ENCODE measurements at regions of chr17 and their contacts with region 1.

Region 1: DNA sequence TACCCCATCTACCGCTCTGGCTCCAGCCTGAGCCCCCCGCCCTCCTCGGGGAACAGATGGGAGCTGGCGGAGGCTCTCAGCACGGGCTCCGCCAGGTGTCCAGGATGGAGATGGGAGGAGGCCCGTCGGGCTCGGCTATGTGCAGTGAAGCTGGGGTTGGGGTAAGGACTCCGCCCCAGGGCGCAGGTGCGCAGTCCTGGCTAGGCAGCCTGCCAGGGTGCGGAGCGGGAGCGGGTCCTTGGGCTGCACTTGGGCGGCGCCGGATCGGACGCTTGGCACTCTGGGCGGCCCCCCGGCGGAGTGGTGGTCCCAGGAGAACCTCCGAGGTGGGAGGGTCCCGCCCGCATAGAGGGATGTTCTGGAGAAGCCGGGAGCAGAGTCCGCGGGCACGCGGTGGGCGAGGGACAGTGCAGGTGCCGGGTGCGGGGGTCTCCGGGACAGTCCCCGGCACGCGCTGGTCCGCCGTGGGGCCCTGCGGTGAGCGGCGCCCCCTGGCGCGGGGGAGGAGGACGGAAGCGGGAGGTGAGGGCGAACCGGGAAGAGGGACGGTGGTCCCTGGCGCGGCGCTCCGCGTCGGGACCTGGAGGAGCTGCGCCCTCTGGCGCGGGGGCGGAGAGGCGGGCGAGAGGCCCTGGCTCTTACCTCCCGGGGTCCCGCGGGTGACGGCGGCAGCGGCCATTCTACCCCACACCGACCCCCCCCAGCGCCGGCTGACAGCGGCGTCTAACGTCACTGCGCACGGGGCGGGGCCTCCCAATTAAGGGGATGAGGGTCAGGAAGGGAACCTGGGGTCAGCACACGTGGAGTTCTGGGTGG is at the start of gene CAMTA2:
- DNase-seq: peak; percentile 87 to 90
- ATAC-seq: peak; percentile 89
- H3K4me3 ChIP-seq: peak within 1 kb of the TSS; percentile 78
- H3K27ac ChIP-seq: peak within 1 kb of the TSS; percentile 88 to 91
- H3K4me1 ChIP-seq: peaks cover 21% of the 10 kb centered on the region
- CTCF ChIP-seq: peak; percentile 98
- EP300 ChIP-seq: no peak
- POLR2A ChIP-seq: peak; percentile 54
- RAD21 ChIP-seq: peak; percentile 44 to 75; a peak in 4 of 5 replicates
- polyA plus RNA-seq, gene CAMTA2: 12.4 and 17.7 TPM in 2 replicates

Region 2: GRCh38 chr17:4903051-4903818 is 83.9 kb before region 1 on chr17 and contains the start of gene CHRNE:
- CTCF ChIA-PET with region 1: interaction called, 40 read pairs
- POLR2A ChIA-PET with region 1: no interaction called
- DNase-seq: peak; percentile 58 to 89
- ATAC-seq: peak; percentile 74 to 85
- H3K4me3 ChIP-seq: no peak within 1 kb of the TSS
- H3K27ac ChIP-seq: no peak within 1 kb of the TSS
- H3K4me1 ChIP-seq: 0 out of 3 replicates have a peak, but pooled peaks cover 5% of the 10 kb centered on the region
- CTCF ChIP-seq: peak; percentile 90
- EP300 ChIP-seq: no peak
- POLR2A ChIP-seq: no peak
- RAD21 ChIP-seq: peak; percentile 62 to 73
- polyA plus RNA-seq, gene CHRNE: 0.07 and 0.10 TPM in 2 replicates

Region 3: GRCh38 chr17:4939796-4940624 is 47.1 kb before region 1 on chr17 and contains the starts of genes RNF167 and SLC25A11:
- CTCF ChIA-PET with region 1: interaction called, 33 read pairs
- POLR2A ChIA-PET with region 1: interaction called, 13 read pairs
- DNase-seq: peak; percentile 99 to 100
- ATAC-seq: peak; percentile 80 to 81
- H3K4me3 ChIP-seq: peak within 1 kb of the TSS; percentile 85
- H3K27ac ChIP-seq: peak within 1 kb of the TSS; percentile 89 to 93
- H3K4me1 ChIP-seq: peaks cover 49% of the 10 kb centered on the region
- CTCF ChIP-seq: no peak
- EP300 ChIP-seq: no peak
- POLR2A ChIP-seq: peak; percentile 91
- RAD21 ChIP-seq: 0 out of 5 replicates have a peak, but pooled peaks of 1 of the 2 experiments have one; percentile 5
- polyA plus RNA-seq, gene RNF167: 98.7 and 110 TPM in 2 replicates
- polyA plus RNA-seq, gene SLC25A11: 60.2 and 64.4 TPM in 2 replicates

Region 4: GRCh38 chr17:4956493-4957061 is 30.6 kb before region 1 on chr17:
- CTCF ChIA-PET with region 1: interaction called, 28 read pairs
- POLR2A ChIA-PET with region 1: no interaction called
- DNase-seq: no peak
- ATAC-seq: no peak
- H3K4me3 ChIP-seq: no peak overlapping the region
- H3K27ac ChIP-seq: no peak overlapping the region
- H3K4me1 ChIP-seq: peaks cover 17% of the 10 kb centered on the region
- CTCF ChIP-seq: peak; percentile 24; the same call in 2 of the 3 replicates
- EP300 ChIP-seq: no peak
- POLR2A ChIP-seq: no peak
- RAD21 ChIP-seq: no peak

Region 5: GRCh38 chr17:4997302-4998026 is 10.3 kb after region 1 on chr17 and contains the starts of genes INCA1 and KIF1C:
- CTCF ChIA-PET with region 1: interaction called, 22 read pairs
- POLR2A ChIA-PET with region 1: interaction called, 15 read pairs
- DNase-seq: peak; percentile 91 to 98
- ATAC-seq: peak; percentile 86 to 93
- H3K4me3 ChIP-seq: peak within 1 kb of the TSS; percentile 95
- H3K27ac ChIP-seq: peak within 1 kb of the TSS; percentile 87 to 91
- H3K4me1 ChIP-seq: peaks cover 26% of the 10 kb centered on the region
- CTCF ChIP-seq: no peak
- EP300 ChIP-seq: no peak
- POLR2A ChIP-seq: peak; percentile 82
- RAD21 ChIP-seq: no peak
- polyA plus RNA-seq, gene INCA1: 0.66 and 0.86 TPM in 2 replicates
- polyA plus RNA-seq, gene KIF1C: 42.0 and 48.4 TPM in 2 replicates

Region 6: GRCh38 chr17:5023588-5024147 is 36.5 kb after region 1 on chr17:
- CTCF ChIA-PET with region 1: interaction called, 11 read pairs
- POLR2A ChIA-PET with region 1: no interaction called
- DNase-seq: no peak
- ATAC-seq: no peak
- H3K4me3 ChIP-seq: no peak overlapping the region
- H3K27ac ChIP-seq: no peak overlapping the region
- H3K4me1 ChIP-seq: no peaks in the 10 kb centered on the region
- CTCF ChIP-seq: no peak
- EP300 ChIP-seq: no peak
- POLR2A ChIP-seq: no peak
- RAD21 ChIP-seq: no peak

Region 7: GRCh38 chr17:5065227-5065744 is 78.1 kb after region 1 on chr17:
- CTCF ChIA-PET with region 1: interaction called, 51 read pairs
- POLR2A ChIA-PET with region 1: no interaction called
- DNase-seq: no peak
- ATAC-seq: no peak
- H3K4me3 ChIP-seq: no peak overlapping the region
- H3K27ac ChIP-seq: no peak overlapping the region
- H3K4me1 ChIP-seq: no peaks in the 10 kb centered on the region
- CTCF ChIP-seq: no peak
- EP300 ChIP-seq: no peak
- POLR2A ChIP-seq: no peak
- RAD21 ChIP-seq: no peak

Region 8: GRCh38 chr17:5184288-5184687 is 197.1 kb after region 1 on chr17:
- CTCF ChIA-PET with region 1: no interaction called
- POLR2A ChIA-PET with region 1: no interaction called
- DNase-seq: no peak
- ATAC-seq: no peak
- H3K4me3 ChIP-seq: no peak overlapping the region
- H3K27ac ChIP-seq: no peak overlapping the region
- H3K4me1 ChIP-seq: no peaks in the 10 kb centered on the region
- CTCF ChIP-seq: no peak
- EP300 ChIP-seq: no peak
- POLR2A ChIP-seq: no peak
- RAD21 ChIP-seq: no peak